ENCODE measurements at regions of chr3 and their contacts with region 1.

Region 1: GRCh38 chr3:148955544-148956346 is 35.6 kb upstream of the GYG1 start:
- DNase-seq: no peak
- ATAC-seq: peak; percentile 43
- H3K4me3 Mint-ChIP-seq: no peak overlapping the region
- H3K27ac Mint-ChIP-seq: peak overlapping the region; percentile 8
- H3K4me1 Mint-ChIP-seq: peaks cover 34% of the 10 kb centered on the region
- H3K27me3 Mint-ChIP-seq: no peaks in the 10 kb centered on the region
- CTCF ChIP-seq: no peak

Region 2: DNA sequence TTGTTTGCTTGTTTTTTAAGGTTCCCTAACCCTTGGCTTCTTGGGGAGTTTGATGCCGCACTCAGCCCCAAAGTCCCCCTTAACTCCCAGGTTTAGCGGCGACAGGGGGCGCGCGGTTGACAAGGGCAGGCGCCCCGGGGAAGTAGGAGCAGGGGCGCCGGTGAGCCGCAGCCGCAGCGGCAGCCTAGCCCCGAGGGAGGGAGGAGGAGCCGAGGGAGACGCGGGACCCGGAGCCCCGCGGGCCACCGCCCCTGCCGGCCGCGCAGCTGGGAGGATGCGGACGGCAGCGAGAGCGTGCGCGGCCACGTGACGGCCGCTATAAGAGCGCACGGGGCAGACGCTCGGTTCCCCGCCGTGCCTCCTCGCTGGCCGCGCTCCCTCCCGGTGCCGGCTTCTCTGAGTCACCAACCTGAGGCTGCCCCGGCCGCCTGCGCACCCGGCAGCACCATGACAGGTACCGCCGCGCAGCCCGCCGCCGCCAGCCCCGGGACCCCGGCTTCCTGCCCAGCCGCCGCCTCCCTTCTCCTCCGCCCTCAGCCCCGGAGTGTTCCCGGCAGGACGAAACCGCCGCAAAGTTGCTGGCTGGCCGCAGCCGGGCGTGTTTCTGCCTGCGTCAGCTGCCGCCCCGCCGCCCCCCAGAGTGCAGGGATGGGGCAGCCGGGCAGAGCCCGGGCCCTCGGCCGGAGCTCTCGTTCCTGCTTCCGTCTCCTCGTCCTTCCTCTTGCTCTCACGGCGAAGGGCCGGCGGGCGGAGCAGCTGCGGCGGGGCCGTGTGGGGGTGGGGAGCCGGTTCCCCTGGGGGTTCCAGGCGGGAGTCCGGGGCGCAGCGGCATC is 35.7 kb after region 1 on chr3 and contains the start of gene GYG1:
- CTCF ChIA-PET with region 1: interaction called, 23 read pairs
- POLR2A ChIA-PET with region 1: interaction called, 6 read pairs
- DNase-seq: peak; percentile 77
- ATAC-seq: peak; percentile 82
- H3K4me3 Mint-ChIP-seq: peak within 1 kb of the TSS; percentile 71
- H3K27ac Mint-ChIP-seq: no peak within 1 kb of the TSS; the same call in 1 of the 2 replicates
- H3K4me1 Mint-ChIP-seq: peaks cover 42% of the 10 kb centered on the region
- H3K27me3 Mint-ChIP-seq: peaks cover 11% of the 10 kb centered on the region
- CTCF ChIP-seq: no peak
- total RNA-seq, gene GYG1: 34.8 to 43.1 TPM (median 41.7 TPM) in 3 replicates

Region 3: DNA sequence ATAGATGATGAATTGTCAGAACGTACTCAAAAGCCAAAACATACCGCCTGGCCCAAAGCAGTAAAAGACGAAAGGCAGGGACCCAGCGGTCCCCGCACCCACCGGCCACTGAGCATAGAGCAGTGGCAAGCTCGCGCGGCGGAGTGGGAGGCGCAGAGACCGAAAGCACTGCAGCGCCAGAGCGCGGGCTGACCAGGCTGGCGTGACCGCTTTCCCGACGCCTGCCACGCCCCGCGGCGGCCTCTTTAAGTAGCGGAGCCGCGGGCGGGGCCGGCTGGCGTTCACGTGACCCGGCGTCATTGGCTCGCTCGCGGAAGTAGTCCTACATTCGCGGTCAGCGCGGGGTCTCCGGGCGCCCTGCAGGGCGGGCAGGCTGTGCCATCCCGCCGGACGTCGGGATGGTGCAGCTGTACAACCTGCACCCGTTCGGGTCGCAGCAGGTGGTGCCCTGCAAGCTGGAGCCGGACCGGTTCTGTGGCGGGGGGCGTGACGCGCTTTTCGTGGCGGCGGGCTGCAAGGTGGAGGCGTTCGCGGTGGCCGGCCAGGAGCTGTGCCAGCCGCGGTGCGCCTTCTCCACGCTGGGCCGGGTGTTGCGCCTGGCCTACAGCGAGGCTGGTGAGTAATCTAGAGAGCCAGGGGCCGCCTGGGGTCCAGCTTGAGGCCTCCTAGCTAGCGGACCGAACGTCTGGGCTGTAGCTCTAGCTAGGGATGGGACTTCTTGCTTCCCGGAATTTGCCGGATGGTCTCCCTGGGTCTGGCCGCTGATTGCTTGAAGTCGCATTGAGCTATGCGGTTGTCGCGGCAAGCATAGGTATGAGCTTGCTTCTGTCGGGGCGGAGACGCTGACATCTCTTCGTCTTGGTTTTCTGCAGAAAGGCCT is 173.8 kb after region 1 on chr3 and contains the start of gene HPS3:
- CTCF ChIA-PET with region 1: interaction called, 26 read pairs
- POLR2A ChIA-PET with region 1: interaction called, 4 read pairs
- DNase-seq: peak; percentile 86
- ATAC-seq: peak; percentile 83
- H3K4me3 Mint-ChIP-seq: peak within 1 kb of the TSS; percentile 89
- H3K27ac Mint-ChIP-seq: peak within 1 kb of the TSS; percentile 95
- H3K4me1 Mint-ChIP-seq: peaks cover 51% of the 10 kb centered on the region
- H3K27me3 Mint-ChIP-seq: peaks cover 8% of the 10 kb centered on the region
- CTCF ChIP-seq: no peak
- total RNA-seq, gene HPS3: 51.3 to 59.6 TPM (median 58.7 TPM) in 3 replicates

Region 4: GRCh38 chr3:149288655-149289054 is 332.9 kb after region 1 on chr3:
- CTCF ChIA-PET with region 1: interaction called, 10 read pairs
- POLR2A ChIA-PET with region 1: no interaction called
- DNase-seq: no peak
- ATAC-seq: peak; percentile 61
- H3K4me3 Mint-ChIP-seq: no peak overlapping the region
- H3K27ac Mint-ChIP-seq: no peak overlapping the region
- H3K4me1 Mint-ChIP-seq: no peaks in the 10 kb centered on the region
- H3K27me3 Mint-ChIP-seq: no peaks in the 10 kb centered on the region; the same call in 1 of the 2 replicates
- CTCF ChIP-seq: no peak

Region 5: GRCh38 chr3:149480325-149481017 is 524.7 kb after region 1 on chr3:
- CTCF ChIA-PET with region 1: interaction called, 21 read pairs
- POLR2A ChIA-PET with region 1: no interaction called
- DNase-seq: peak; percentile 91
- ATAC-seq: peak; percentile 99
- H3K4me3 Mint-ChIP-seq: no peak overlapping the region
- H3K27ac Mint-ChIP-seq: no peak overlapping the region
- H3K4me1 Mint-ChIP-seq: peaks cover 8% of the 10 kb centered on the region
- H3K27me3 Mint-ChIP-seq: no peaks in the 10 kb centered on the region
- CTCF ChIP-seq: peak; percentile 66